IMR-90 (cell line): ENCODE measurements at regions of chr6 and their contacts with region 1.

Region 1: GRCh38 chr6:2353412-2354137 is 108.2 kb upstream of the GMDS start:
- DNase-seq: peak; percentile 86
- ATAC-seq: peak; percentile 72
- H3K4me3 ChIP-seq: no peak overlapping the region
- H3K27ac ChIP-seq: peak overlapping the region; percentile 15; the same call in 1 of the 2 replicates
- H3K4me1 ChIP-seq: peaks cover 8% of the 10 kb centered on the region
- H3K27me3 ChIP-seq: no peaks in the 10 kb centered on the region
- CTCF ChIP-seq: peak; percentile 94
- POLR2A ChIP-seq: no peak
- RAD21 ChIP-seq: peak; percentile 90

Region 2: GRCh38 chr6:1686117-1687098 is 667.2 kb before region 1 on chr6:
- CTCF ChIA-PET with region 1: no interaction called
- POLR2A ChIA-PET with region 1: no interaction called
- dilution Hi-C with region 1: no loop called
- in situ Hi-C with region 1: no loop called
- intact Hi-C with region 1: loop called (anchors 2 kb)
- DNase-seq: peak; percentile 96
- ATAC-seq: peak; percentile 89
- H3K4me3 ChIP-seq: no peak overlapping the region
- H3K27ac ChIP-seq: peak overlapping the region; percentile 83
- H3K4me1 ChIP-seq: peaks cover 14% of the 10 kb centered on the region
- H3K27me3 ChIP-seq: no peaks in the 10 kb centered on the region
- CTCF ChIP-seq: peak; percentile 50
- POLR2A ChIP-seq: no peak; the same call in 1 of the 2 replicates
- RAD21 ChIP-seq: peak; percentile 19; the same call in 1 of the 2 replicates

Region 3: DNA sequence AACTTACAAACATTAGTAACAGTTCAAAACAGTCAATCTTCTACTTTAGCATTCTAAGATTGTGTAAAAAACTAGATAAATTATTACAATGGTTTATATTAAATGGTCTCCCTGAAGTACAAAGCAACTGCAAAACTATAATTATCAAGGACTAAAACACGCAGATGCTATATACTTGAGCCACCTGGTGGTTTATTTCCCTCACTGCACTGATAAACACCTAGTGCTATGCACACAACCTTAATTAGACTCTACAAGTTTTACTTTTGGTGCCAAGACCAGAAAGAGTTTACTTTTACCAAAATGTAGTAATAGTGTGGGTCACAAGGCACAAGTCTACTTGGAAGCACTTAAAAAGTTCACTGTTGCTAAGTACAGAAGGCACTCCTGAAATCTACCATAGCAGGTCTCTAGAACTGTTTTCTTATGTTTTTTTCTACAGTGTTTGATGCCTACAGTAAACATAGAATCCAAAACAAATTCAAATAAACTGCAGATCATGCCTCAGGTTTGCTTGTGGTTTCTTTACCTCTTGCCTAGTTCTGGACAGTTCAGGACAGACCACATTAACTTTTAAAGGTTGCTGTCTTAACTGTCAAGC is 157.4 kb before region 1 on chr6:
- CTCF ChIA-PET with region 1: no interaction called
- POLR2A ChIA-PET with region 1: no interaction called
- dilution Hi-C with region 1: no loop called
- in situ Hi-C with region 1: no loop called
- intact Hi-C with region 1: loop called (anchors 1 kb)
- DNase-seq: peak; percentile 61
- ATAC-seq: peak; percentile 84
- H3K4me3 ChIP-seq: no peak overlapping the region
- H3K27ac ChIP-seq: no peak overlapping the region
- H3K4me1 ChIP-seq: peaks cover 8% of the 10 kb centered on the region; the same call in 1 of the 2 replicates
- H3K27me3 ChIP-seq: no peaks in the 10 kb centered on the region
- CTCF ChIP-seq: peak; percentile 72
- POLR2A ChIP-seq: no peak
- RAD21 ChIP-seq: peak; percentile 81

Region 4: DNA sequence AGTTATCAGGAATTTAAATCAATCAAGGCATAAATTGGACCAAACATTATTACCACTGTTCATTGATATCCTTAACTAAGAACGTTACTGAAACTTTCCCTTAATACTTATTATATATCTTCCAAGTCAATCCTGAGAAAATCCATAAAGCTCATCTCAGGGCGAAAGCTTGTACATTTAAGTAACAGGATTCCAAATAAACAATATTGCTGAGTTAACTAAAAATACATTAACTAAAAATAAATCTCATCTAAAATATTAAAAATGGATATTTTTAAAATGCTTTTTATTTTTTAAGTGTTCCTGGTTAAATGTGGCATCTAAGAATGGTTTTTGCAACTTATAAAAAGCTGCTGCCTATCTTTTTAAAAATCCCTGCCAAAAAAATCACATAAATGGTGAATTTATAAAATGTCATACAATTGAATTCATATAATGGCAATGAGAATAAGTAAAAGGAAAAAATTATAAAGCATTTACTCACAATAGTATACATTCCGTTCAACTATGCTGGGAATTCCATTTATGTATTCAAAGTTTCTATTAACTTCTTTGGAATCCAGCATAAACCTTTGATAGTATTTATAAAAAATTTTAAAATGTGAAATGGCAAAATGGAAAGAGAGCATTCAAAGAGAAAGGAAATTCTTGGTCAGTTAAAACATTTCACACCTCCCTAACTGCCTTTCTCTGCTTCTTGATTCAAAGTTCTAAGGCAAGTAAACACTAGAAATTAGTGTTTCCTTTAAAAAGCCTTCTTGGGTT is 87.4 kb before region 1 on chr6:
- CTCF ChIA-PET with region 1: no interaction called
- POLR2A ChIA-PET with region 1: no interaction called
- dilution Hi-C with region 1: no loop called
- in situ Hi-C with region 1: no loop called
- intact Hi-C with region 1: no loop called
- DNase-seq: peak; percentile 28
- ATAC-seq: peak; percentile 68
- H3K4me3 ChIP-seq: no peak overlapping the region
- H3K27ac ChIP-seq: no peak overlapping the region
- H3K4me1 ChIP-seq: peaks cover 6% of the 10 kb centered on the region
- H3K27me3 ChIP-seq: no peaks in the 10 kb centered on the region
- CTCF ChIP-seq: no peak
- POLR2A ChIP-seq: no peak
- RAD21 ChIP-seq: no peak

Region 5: DNA sequence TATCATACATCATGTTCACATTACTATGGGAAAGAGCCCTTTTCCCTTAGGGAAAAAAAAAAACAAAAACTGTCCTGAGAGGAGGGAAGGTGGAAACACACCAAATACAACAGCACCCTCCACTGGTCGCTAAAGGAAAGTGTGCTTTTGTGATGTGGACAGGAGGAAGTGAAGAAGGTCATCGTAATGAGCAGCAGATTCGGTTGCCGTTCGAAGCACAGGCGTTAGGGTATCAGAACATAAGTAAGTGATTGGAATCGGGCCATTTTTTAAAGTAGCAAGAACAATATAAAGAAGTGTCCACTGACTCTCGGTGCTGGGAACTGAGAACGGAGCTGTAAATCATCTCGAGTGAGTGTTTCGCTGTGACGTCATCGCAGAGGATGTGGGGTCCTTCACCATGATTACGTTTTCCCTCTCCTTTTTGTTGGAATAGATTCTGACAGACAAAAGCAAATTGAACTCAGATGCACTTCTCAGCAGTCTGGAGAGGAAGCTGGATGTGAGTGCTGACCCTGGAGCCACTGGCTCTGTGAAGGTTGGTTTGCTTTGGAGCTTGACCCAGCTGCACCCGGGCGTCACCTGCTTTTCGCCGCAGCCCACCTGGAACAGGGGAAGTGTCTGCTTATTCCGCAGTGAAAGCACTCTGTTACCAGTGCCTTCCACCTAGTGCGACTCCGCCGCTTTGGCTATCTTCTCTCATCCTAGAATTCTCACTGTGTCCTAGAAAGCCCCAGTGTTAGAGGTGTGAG is 95.4 kb after region 1 on chr6:
- CTCF ChIA-PET with region 1: interaction called, 3 read pairs
- POLR2A ChIA-PET with region 1: no interaction called
- dilution Hi-C with region 1: no loop called
- in situ Hi-C with region 1: no loop called
- intact Hi-C with region 1: loop called (anchors 2 kb)
- DNase-seq: peak; percentile 89
- ATAC-seq: peak; percentile 95
- H3K4me3 ChIP-seq: peak overlapping the region; percentile 50
- H3K27ac ChIP-seq: no peak overlapping the region
- H3K4me1 ChIP-seq: peaks cover 4% of the 10 kb centered on the region; the same call in 1 of the 2 replicates
- H3K27me3 ChIP-seq: no peaks in the 10 kb centered on the region; the same call in 1 of the 2 replicates
- CTCF ChIP-seq: peak; percentile 89
- POLR2A ChIP-seq: no peak
- RAD21 ChIP-seq: peak; percentile 95

Region 6: GRCh38 chr6:2695454-2696095 is 342.0 kb after region 1 on chr6:
- CTCF ChIA-PET with region 1: no interaction called
- POLR2A ChIA-PET with region 1: no interaction called
- dilution Hi-C with region 1: no loop called
- in situ Hi-C with region 1: no loop called
- intact Hi-C with region 1: loop called (anchors 10 kb)
- DNase-seq: peak; percentile 57
- ATAC-seq: peak; percentile 77
- H3K4me3 ChIP-seq: no peak overlapping the region
- H3K27ac ChIP-seq: no peak overlapping the region
- H3K4me1 ChIP-seq: no peaks in the 10 kb centered on the region
- H3K27me3 ChIP-seq: peaks cover 15% of the 10 kb centered on the region
- CTCF ChIP-seq: peak; percentile 63
- POLR2A ChIP-seq: no peak
- RAD21 ChIP-seq: peak; percentile 72